SK-N-SH (cell line): ENCODE measurements at regions of chr5 and their contacts with region 1.

Region 1: GRCh38 chr5:79133657-79134451 is 22.2 kb downstream of the BHMT start:
- DNase-seq: peak; percentile 69
- H3K4me3 ChIP-seq: peak overlapping the region; percentile 43 to 59
- H3K27ac ChIP-seq: peak overlapping the region; percentile 74 to 82
- H3K4me1 ChIP-seq: peaks cover 0 to 12% of the 10 kb centered on the region in 2 experiments; a peak in 2 of 4 replicates
- H3K27me3 ChIP-seq: no peaks in the 10 kb centered on the region
- CTCF ChIP-seq: peak; percentile 81
- EP300 ChIP-seq: no peak
- RAD21 ChIP-seq: peak; percentile 81

Region 2: GRCh38 chr5:78984439-78985115 is 149.3 kb before region 1 on chr5:
- CTCF ChIA-PET with region 1: interaction called, 10 read pairs
- POLR2A ChIA-PET with region 1: interaction called, 3 read pairs
- DNase-seq: peak; percentile 97
- H3K4me3 ChIP-seq: peak overlapping the region; percentile 73 to 85
- H3K27ac ChIP-seq: peak overlapping the region; percentile 84 to 97
- H3K4me1 ChIP-seq: peaks cover 4 to 16% of the 10 kb centered on the region in 2 experiments; a peak in 2 of 4 replicates
- H3K27me3 ChIP-seq: no peaks in the 10 kb centered on the region
- CTCF ChIP-seq: peak; percentile 37
- EP300 ChIP-seq: 0 out of 4 replicates have a peak, but pooled peaks of 1 of the 2 experiments have one; percentile 8
- RAD21 ChIP-seq: peak; percentile 13; the same call in 1 of the 2 replicates

Region 3: DNA sequence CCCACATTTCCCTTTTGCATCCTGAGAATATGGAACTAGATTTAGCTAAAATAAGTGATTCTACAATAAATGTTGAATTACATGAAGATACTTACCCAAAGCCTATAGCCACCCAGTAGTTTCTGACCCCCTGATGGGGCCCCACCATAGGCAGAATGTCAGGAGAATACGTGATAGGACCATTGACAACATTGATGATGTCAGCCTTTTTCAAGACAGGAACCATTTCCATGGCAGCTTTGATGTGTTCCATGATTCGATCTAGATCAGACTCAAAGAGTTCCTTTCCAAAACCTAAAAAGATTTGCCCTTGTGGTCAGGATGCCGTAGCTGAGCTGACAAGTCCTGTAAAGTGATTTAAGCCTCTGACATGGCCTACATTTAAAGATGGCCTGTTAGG is 91.7 kb before region 1 on chr5:
- CTCF ChIA-PET with region 1: interaction called, 18 read pairs
- POLR2A ChIA-PET with region 1: no interaction called
- DNase-seq: no peak
- H3K4me3 ChIP-seq: no peak overlapping the region
- H3K27ac ChIP-seq: no peak overlapping the region
- H3K4me1 ChIP-seq: no peaks in the 10 kb centered on the region
- H3K27me3 ChIP-seq: no peaks in the 10 kb centered on the region; the same call in 1 of the 2 replicates
- CTCF ChIP-seq: no peak
- EP300 ChIP-seq: no peak
- RAD21 ChIP-seq: no peak

Region 4: GRCh38 chr5:79069488-79070349 is 64.1 kb before region 1 on chr5 and contains the starts of genes BHMT2 and DMGDH:
- CTCF ChIA-PET with region 1: interaction called, 11 read pairs
- POLR2A ChIA-PET with region 1: no interaction called
- DNase-seq: peak; percentile 20
- H3K4me3 ChIP-seq: no peak within 1 kb of the TSS
- H3K27ac ChIP-seq: peak within 1 kb of the TSS in 1 of 2 experiments; percentile 47; a peak in 2 of 4 replicates
- H3K4me1 ChIP-seq: peaks cover 0 to 10% of the 10 kb centered on the region in 2 experiments; a peak in 2 of 4 replicates
- H3K27me3 ChIP-seq: no peaks in the 10 kb centered on the region
- CTCF ChIP-seq: no peak
- EP300 ChIP-seq: no peak
- RAD21 ChIP-seq: no peak
- polyA plus RNA-seq, gene BHMT2: not detected in 2 replicates
- polyA plus RNA-seq, gene DMGDH: 0.56 and 0.70 TPM in 2 replicates

Region 5: GRCh38 chr5:79235634-79236363 is 101.9 kb after region 1 on chr5 and contains the start of gene JMY:
- CTCF ChIA-PET with region 1: interaction called, 25 read pairs
- POLR2A ChIA-PET with region 1: no interaction called
- DNase-seq: peak; percentile 96
- H3K4me3 ChIP-seq: peak within 1 kb of the TSS; percentile 75 to 96
- H3K27ac ChIP-seq: peak within 1 kb of the TSS; percentile 71 to 74
- H3K4me1 ChIP-seq: peaks cover 0 to 2% of the 10 kb centered on the region in 2 experiments; a peak in 2 of 4 replicates
- H3K27me3 ChIP-seq: no peaks in the 10 kb centered on the region
- CTCF ChIP-seq: no peak
- EP300 ChIP-seq: no peak
- RAD21 ChIP-seq: no peak
- polyA plus RNA-seq, gene JMY: 1.7 and 1.9 TPM in 2 replicates

Region 6: GRCh38 chr5:79349047-79349446 is 215.2 kb after region 1 on chr5:
- CTCF ChIA-PET with region 1: no interaction called
- POLR2A ChIA-PET with region 1: no interaction called
- DNase-seq: no peak
- H3K4me3 ChIP-seq: no peak overlapping the region
- H3K27ac ChIP-seq: no peak overlapping the region
- H3K4me1 ChIP-seq: no peaks in the 10 kb centered on the region
- H3K27me3 ChIP-seq: no peaks in the 10 kb centered on the region
- CTCF ChIP-seq: no peak
- EP300 ChIP-seq: no peak
- RAD21 ChIP-seq: no peak

Region 7: GRCh38 chr5:79464695-79465332 is 331.0 kb after region 1 on chr5:
- CTCF ChIA-PET with region 1: interaction called, 104 read pairs
- POLR2A ChIA-PET with region 1: no interaction called
- DNase-seq: peak; percentile 39
- H3K4me3 ChIP-seq: no peak overlapping the region
- H3K27ac ChIP-seq: no peak overlapping the region
- H3K4me1 ChIP-seq: no peaks in the 10 kb centered on the region
- H3K27me3 ChIP-seq: no peaks in the 10 kb centered on the region
- CTCF ChIP-seq: peak; percentile 79
- EP300 ChIP-seq: no peak
- RAD21 ChIP-seq: peak; percentile 86

Region 8: DNA sequence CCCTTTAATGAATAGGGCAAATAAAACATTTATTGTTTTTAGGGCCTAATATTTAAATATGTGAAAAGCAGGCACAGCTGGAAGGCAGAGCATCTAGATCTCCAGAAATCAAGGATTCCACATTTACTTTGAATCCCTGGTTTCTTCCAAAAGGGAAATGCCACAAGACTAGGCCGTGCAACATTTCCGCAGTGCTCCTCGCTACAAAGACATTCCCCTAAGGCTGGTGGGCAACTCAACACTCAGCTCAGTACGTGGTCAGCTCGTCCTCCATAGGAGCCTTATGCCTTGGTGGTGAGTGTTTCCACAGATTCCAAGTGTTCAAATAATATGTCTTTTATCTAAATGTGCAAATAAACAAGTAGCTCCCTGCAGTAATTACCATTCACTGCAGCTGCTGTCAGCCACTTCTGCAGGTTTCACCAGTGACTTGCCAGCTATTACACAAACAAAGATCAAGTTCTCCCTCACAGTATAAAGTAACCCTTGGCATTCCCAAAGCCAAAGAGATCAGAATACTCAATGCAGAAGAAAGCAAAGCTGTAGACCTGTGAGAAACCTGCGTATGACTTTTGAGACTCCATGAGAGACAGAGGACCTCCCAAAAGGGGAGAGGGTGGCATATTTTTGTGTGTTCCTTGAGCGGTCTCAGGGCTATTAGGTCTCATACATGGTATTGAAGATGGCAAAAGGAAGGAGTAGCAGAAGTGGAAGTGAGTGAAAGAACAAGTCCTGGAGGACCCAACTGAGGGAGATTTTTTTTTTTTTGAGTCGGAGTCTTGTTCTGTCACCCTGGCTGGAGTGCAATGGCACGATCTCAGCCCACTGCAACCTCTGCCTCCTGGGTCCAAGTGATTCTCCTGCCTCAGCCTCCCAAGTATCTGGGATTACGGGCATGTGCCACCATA is 440.4 kb after region 1 on chr5:
- CTCF ChIA-PET with region 1: no interaction called
- POLR2A ChIA-PET with region 1: no interaction called
- DNase-seq: no peak
- H3K4me3 ChIP-seq: no peak overlapping the region
- H3K27ac ChIP-seq: no peak overlapping the region
- H3K4me1 ChIP-seq: no peaks in the 10 kb centered on the region
- H3K27me3 ChIP-seq: no peaks in the 10 kb centered on the region
- CTCF ChIP-seq: no peak
- EP300 ChIP-seq: no peak
- RAD21 ChIP-seq: no peak